ENCODE measurements at regions of chr7 and their contacts with region 1.

Region 1: GRCh38 chr7:131007394-131008330 is 273.7 kb upstream of the KLF14 start:
- DNase-seq: peak; percentile 57
- H3K4me3 Mint-ChIP-seq: peak overlapping the region; percentile 67
- H3K27ac Mint-ChIP-seq: peak overlapping the region; percentile 95
- H3K4me1 Mint-ChIP-seq: peaks cover 61% of the 10 kb centered on the region
- H3K27me3 Mint-ChIP-seq: no peaks in the 10 kb centered on the region

Region 2: DNA sequence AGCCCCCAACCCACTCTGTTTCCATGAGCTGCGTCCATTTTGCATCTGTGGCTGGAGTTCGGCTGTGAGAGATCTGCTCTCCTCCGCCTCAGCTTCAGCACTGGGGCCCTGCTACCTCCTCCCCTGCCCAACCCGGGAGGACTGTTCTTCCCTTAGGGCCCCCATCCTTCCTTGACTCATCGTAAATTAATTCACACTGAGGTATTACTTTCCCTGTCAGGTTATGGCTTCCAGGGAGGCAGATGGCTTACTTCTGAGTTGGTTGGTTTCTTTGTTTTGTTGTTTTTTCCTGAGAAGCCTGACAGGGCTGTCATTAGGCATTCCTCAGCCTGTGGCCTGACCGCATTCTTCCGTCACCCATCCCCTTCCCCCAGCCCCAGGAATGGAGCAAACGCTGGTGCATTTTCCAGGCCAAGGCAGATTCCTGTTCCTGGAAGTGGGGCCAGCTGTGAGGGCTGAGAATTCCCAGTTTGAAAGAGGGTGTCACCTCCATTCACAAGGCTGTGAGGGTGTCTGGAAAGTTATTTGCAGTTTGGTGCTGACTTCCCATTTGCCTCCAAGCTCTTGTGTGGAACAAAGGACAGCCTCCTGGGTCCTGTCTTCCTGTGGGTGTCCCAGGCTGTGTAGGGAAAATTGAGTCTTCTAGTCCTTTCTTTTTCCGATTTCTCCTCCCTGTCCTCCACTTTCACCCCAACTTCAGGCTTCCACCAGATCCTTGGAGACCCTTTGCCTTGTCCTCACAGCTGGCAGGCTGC is 651.4 kb before region 1 on chr7:
- intact Hi-C with region 1: no loop called
- DNase-seq: no peak
- H3K4me3 Mint-ChIP-seq: no peak overlapping the region
- H3K27ac Mint-ChIP-seq: no peak overlapping the region
- H3K4me1 Mint-ChIP-seq: peaks cover 5% of the 10 kb centered on the region
- H3K27me3 Mint-ChIP-seq: no peaks in the 10 kb centered on the region

Region 3: GRCh38 chr7:130896898-130897514 is 110.7 kb before region 1 on chr7:
- intact Hi-C with region 1: loop called (anchors 2 kb)
- DNase-seq: peak; percentile 62
- H3K4me3 Mint-ChIP-seq: peak overlapping the region; percentile 26
- H3K27ac Mint-ChIP-seq: peak overlapping the region; percentile 86
- H3K4me1 Mint-ChIP-seq: peaks cover 73% of the 10 kb centered on the region
- H3K27me3 Mint-ChIP-seq: no peaks in the 10 kb centered on the region

Region 4: DNA sequence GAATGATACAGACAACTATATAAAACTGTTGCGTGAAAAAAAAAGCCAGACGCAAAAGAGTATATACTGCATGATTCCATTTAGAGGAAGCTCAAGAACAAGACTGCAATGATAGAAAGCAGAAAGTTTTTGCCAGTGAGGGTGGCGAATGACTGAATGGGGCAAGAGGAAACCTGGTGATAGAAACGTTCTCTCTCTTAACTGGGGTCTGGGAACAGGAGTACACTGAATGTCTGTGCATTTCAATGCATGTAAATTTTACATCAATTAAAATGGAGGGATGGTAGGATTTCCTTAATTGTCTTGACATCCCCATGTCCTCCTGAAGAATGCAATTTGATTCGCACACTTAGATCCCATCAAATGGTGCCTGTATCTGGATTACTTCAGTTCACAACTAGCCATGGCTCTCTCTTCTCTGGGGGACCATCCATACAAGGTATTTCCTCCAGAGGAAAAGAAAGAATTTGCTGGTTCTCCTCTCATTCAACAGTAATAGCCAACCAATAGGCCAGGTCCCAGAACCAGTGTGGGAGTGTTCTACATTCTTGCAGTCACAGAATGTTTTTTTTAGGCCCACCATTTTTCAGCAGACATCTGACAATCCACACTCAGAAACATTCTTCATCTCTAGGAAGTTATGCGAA is 52.6 kb before region 1 on chr7:
- intact Hi-C with region 1: no loop called
- DNase-seq: no peak
- H3K4me3 Mint-ChIP-seq: peak overlapping the region; percentile 95
- H3K27ac Mint-ChIP-seq: peak overlapping the region; percentile 75
- H3K4me1 Mint-ChIP-seq: peaks cover 45% of the 10 kb centered on the region
- H3K27me3 Mint-ChIP-seq: no peaks in the 10 kb centered on the region

Region 5: GRCh38 chr7:130970696-130971095 is 37.0 kb before region 1 on chr7:
- intact Hi-C with region 1: loop called (anchors 1 kb)
- DNase-seq: no peak
- H3K4me3 Mint-ChIP-seq: peak overlapping the region; percentile 44
- H3K27ac Mint-ChIP-seq: peak overlapping the region; percentile 94
- H3K4me1 Mint-ChIP-seq: peaks cover 70% of the 10 kb centered on the region
- H3K27me3 Mint-ChIP-seq: no peaks in the 10 kb centered on the region

Region 6: GRCh38 chr7:130996841-130997231 is 10.8 kb before region 1 on chr7:
- intact Hi-C with region 1: loop called (anchors 1 kb)
- DNase-seq: no peak
- H3K4me3 Mint-ChIP-seq: peak overlapping the region; percentile 66
- H3K27ac Mint-ChIP-seq: peak overlapping the region; percentile 90
- H3K4me1 Mint-ChIP-seq: peaks cover 66% of the 10 kb centered on the region
- H3K27me3 Mint-ChIP-seq: no peaks in the 10 kb centered on the region

Region 7: DNA sequence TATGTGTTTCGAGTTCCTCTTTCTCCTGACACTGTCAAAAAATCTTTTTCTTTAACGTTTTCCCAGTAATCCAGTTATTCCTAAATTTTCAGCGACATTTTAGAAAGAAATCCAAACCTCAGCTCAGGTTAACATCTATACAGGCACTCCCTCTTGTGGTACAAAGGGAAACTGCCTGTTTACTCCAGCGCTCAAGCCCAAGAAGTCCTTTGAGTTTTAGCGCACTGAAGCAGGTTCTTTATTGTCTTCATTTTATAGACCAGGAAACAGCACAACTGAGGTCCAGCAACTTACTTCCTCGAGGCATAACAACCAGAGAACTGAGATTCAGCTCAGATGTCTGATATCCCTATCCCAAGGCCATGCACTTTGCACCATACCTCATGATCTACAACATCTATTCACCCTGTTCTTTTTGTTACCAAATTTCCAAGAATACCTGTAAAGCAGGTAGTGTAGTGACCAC is 32.8 kb after region 1 on chr7:
- intact Hi-C with region 1: loop called (anchors 1 kb)
- DNase-seq: no peak
- H3K4me3 Mint-ChIP-seq: no peak overlapping the region
- H3K27ac Mint-ChIP-seq: no peak overlapping the region
- H3K4me1 Mint-ChIP-seq: peaks cover 33% of the 10 kb centered on the region
- H3K27me3 Mint-ChIP-seq: no peaks in the 10 kb centered on the region

Region 8: GRCh38 chr7:131424219-131424822 is 416.7 kb after region 1 on chr7:
- intact Hi-C with region 1: no loop called
- DNase-seq: no peak
- H3K4me3 Mint-ChIP-seq: no peak overlapping the region
- H3K27ac Mint-ChIP-seq: no peak overlapping the region
- H3K4me1 Mint-ChIP-seq: peaks cover 5% of the 10 kb centered on the region
- H3K27me3 Mint-ChIP-seq: no peaks in the 10 kb centered on the region